Breast epithelium (tissue), 4 donors: ENCODE measurements at regions of chr4 and their contacts with region 1.

Region 1: DNA sequence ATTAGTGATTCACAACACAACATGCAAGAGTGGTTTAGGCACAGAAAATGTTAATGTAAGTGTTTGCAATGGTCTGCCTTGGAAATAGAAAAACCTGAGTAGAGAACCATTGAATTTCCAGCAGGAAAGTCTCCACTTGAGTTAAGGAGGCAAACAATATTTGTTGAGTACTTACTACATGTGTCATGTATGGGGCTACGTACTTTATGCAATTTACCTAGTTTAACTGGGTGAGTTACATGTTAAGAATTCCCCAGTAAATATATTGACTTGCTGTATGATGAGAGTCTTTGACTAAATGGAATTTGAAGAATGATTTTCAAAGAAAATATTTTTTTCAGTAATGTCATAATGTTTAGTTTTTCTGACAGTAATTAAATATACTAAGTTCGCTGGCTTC is 7.8 kb upstream of the NPNT start:
- DNase-seq: no peak
- H3K4me3 ChIP-seq: no peak overlapping the region
- H3K27ac ChIP-seq: no peak overlapping the region
- H3K4me1 ChIP-seq: no peaks in the 10 kb centered on the region
- H3K27me3 ChIP-seq: no peaks in the 10 kb centered on the region
- CTCF ChIP-seq: no peak
- POLR2A ChIP-seq: no peak

Region 2: DNA sequence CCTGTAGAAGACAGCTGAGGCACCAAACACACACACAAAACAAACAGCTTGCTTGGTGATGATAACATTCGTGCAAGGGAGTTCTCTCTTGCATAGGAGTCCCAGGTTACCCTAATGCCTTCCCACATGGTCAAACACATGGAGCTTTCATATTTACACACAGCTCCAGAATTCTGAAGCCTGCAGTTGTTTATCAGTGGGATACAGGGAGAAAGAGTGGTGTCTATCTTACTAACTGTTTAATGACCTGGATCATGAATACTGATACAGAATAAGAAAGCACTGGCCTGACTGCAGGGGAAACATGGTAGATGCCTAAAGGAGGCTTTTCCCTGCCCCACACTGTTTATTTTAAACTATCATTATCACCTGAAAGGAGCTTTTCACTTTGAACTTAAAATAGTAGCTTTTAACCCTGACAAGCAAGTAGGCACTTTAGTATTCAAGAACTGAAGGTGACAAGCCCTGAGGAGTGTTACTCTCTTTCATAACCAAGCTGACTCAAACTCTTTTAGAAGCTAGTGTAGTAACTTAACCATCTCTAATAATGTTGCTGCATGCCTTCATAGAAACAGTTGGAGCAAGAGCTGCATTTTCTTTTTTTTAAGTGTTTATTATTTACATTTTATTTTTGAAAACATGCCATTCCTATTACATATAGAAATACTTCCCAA is 725.2 kb before region 1 on chr4:
- intact Hi-C with region 1: loop called (anchors 5 kb)
- DNase-seq: no peak
- H3K4me3 ChIP-seq: no peak overlapping the region
- H3K27ac ChIP-seq: no peak overlapping the region
- H3K4me1 ChIP-seq: no peaks in the 10 kb centered on the region
- H3K27me3 ChIP-seq: no peaks in the 10 kb centered on the region
- CTCF ChIP-seq: no peak
- POLR2A ChIP-seq: no peak

Region 3: GRCh38 chr4:105683038-105683437 is 204.5 kb before region 1 on chr4:
- intact Hi-C with region 1: no loop called
- DNase-seq: peak; percentile 72 to 81
- H3K4me3 ChIP-seq: no peak overlapping the region
- H3K27ac ChIP-seq: peak overlapping the region; percentile 79 to 81
- H3K4me1 ChIP-seq: no peaks in the 10 kb centered on the region
- H3K27me3 ChIP-seq: no peaks in the 10 kb centered on the region
- CTCF ChIP-seq: no peak
- POLR2A ChIP-seq: no peak